Calu3 (cell line): ENCODE measurements at regions of chr4 and their contacts with region 1.

Region 1: DNA sequence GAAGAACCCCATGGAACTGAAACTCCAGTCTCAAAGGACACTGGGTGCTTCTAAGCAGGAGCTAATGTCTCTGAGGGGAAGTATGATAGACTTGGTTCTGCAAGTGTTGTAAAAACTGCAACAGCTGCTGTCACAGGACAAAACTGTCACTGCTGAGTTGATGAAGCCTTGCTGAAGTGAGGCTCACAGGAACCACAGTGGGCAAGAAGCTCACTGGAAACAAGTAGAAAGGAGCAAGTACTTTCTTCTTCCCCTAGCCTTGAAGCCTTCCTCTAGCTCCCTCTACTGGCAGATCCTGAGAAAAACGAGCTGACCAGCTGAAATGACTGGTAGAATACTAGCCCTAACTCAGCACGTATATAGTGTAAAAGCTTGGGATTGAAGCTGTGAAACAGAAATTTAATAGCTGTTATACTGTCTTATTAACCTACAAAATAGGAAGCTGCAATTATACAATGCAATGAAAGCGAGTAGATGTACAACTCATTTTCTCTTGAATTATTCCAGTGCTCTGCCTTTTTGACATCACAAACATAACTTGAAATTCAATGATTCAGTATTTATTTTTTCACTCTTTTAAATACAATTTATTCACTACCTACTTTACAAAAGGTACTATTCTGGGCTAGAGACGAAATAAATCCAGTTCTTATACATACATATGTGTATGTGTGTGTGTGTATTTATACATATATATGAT is 91.4 kb downstream of the GABRB1 start:
- DNase-seq: peak; percentile 59
- H3K4me3 Mint-ChIP-seq: no peak overlapping the region
- H3K27ac Mint-ChIP-seq: no peak overlapping the region
- H3K4me1 Mint-ChIP-seq: no peaks in the 10 kb centered on the region
- H3K27me3 Mint-ChIP-seq: no peaks in the 10 kb centered on the region
- CTCF ChIP-seq: peak; percentile 69

Region 2: DNA sequence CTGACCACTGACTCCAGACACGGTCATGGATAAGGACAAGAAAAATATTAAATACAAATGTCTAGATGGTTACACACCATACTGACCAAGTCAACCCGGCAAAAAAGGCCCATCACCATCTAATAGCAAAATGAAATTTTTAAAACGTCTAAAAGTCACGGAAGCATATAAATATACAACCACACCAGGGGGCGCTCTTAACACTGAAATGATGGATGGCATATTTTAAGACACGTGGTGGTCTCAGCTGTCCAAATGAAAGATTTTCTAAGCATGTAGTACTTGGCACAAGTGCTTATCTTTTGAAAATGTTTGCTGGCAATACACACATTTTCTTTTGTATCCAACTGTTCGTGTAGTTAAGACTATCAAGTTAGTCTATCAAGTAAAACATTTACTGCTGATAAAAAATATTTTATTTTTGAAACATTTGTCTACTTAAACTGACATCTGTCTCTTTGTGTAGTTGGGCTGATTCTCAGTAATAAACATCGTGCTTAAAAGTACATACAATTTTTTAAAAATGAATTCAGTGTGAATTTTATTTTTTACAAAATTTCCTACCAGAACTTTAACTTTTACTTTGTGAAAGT is 278.3 kb before region 1 on chr4:
- CTCF ChIA-PET with region 1: interaction called, 4 read pairs
- intact Hi-C with region 1: loop called (anchors 10 kb)
- DNase-seq: peak; percentile 53
- H3K4me3 Mint-ChIP-seq: no peak overlapping the region
- H3K27ac Mint-ChIP-seq: no peak overlapping the region
- H3K4me1 Mint-ChIP-seq: no peaks in the 10 kb centered on the region
- H3K27me3 Mint-ChIP-seq: peaks cover 20% of the 10 kb centered on the region
- CTCF ChIP-seq: peak; percentile 59

Region 3: DNA sequence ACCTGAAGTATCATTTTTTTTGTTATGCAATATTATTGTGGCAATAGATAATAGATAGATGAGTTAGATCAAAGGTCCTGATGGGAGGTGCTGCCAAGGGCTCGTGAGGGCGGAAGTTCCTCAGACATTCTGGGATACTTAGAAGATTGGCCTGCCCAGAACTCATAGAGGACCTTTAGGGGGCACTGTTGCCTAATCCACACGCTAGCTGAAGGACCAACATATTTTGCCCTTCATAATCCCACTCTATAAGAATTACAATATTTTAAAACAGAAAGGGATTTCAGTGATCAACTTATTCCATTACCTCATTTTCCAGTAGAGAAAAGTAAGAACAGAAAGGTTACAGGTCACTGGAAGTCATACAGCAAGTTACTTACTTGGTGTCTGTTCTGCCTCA is 190.8 kb before region 1 on chr4:
- CTCF ChIA-PET with region 1: interaction called, 5 read pairs
- intact Hi-C with region 1: loop called (anchors 2 kb)
- DNase-seq: peak; percentile 30
- H3K4me3 Mint-ChIP-seq: no peak overlapping the region
- H3K27ac Mint-ChIP-seq: no peak overlapping the region
- H3K4me1 Mint-ChIP-seq: no peaks in the 10 kb centered on the region
- H3K27me3 Mint-ChIP-seq: no peaks in the 10 kb centered on the region
- CTCF ChIP-seq: no peak

Region 4: GRCh38 chr4:47032415-47033106 is 90.2 kb before region 1 on chr4:
- CTCF ChIA-PET with region 1: interaction called, 5 read pairs
- intact Hi-C with region 1: loop called (anchors 5 kb)
- DNase-seq: peak; percentile 58
- H3K4me3 Mint-ChIP-seq: peak overlapping the region; percentile 61
- H3K27ac Mint-ChIP-seq: no peak overlapping the region
- H3K4me1 Mint-ChIP-seq: no peaks in the 10 kb centered on the region
- H3K27me3 Mint-ChIP-seq: peaks cover 13% of the 10 kb centered on the region
- CTCF ChIP-seq: peak; percentile 62

Region 5: GRCh38 chr4:47383829-47384427 is 261.2 kb after region 1 on chr4:
- CTCF ChIA-PET with region 1: no interaction called
- intact Hi-C with region 1: loop called (anchors 5 kb)
- DNase-seq: no peak
- H3K4me3 Mint-ChIP-seq: no peak overlapping the region
- H3K27ac Mint-ChIP-seq: no peak overlapping the region
- H3K4me1 Mint-ChIP-seq: no peaks in the 10 kb centered on the region
- H3K27me3 Mint-ChIP-seq: peaks cover 9% of the 10 kb centered on the region
- CTCF ChIP-seq: no peak

Region 6: GRCh38 chr4:47485047-47485692 is 362.4 kb after region 1 on chr4 and contains the start of gene ATP10D:
- CTCF ChIA-PET with region 1: no interaction called
- intact Hi-C with region 1: no loop called
- DNase-seq: peak; percentile 92
- H3K4me3 Mint-ChIP-seq: peak within 1 kb of the TSS; percentile 94
- H3K27ac Mint-ChIP-seq: peak within 1 kb of the TSS; percentile 94
- H3K4me1 Mint-ChIP-seq: no peaks in the 10 kb centered on the region
- H3K27me3 Mint-ChIP-seq: no peaks in the 10 kb centered on the region
- CTCF ChIP-seq: no peak
- total RNA-seq, gene ATP10D: 11.0 and 13.8 TPM in 2 replicates